Mammary epithelial cell (primary cell): ENCODE measurements at regions of chr6 and their contacts with region 1.

Region 1: GRCh38 chr6:129292836-129293235 is 409.9 kb downstream of the LAMA2 start:
- DNase-seq: no peak
- H3K4me3 ChIP-seq: no peak overlapping the region
- H3K27ac ChIP-seq: no peak overlapping the region
- H3K4me1 ChIP-seq: no peaks in the 10 kb centered on the region
- H3K27me3 ChIP-seq: peaks cover 3% of the 10 kb centered on the region
- CTCF ChIP-seq: no peak

Region 2: DNA sequence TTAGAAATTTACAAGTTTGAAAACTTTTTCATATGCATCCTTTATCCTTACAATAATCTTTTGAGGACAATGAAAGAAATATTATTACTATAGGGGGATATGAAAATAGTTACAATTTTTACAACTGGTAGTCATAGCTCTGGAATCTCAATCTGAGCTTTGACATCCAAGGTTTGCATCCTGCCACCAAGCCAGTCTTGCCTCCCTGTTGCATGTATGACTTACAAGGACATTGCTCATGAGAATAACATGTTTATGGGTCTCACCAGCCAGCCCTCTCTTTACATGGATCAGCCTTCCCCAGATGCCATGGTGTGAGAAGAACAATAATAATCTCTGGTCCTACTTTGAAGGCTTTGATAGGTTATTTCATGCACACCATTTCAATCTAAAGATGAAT is 1459.5 kb before region 1 on chr6:
- CTCF ChIA-PET with region 1: interaction called, 10 read pairs
- dilution Hi-C with region 1: no loop called
- in situ Hi-C with region 1: no loop called
- intact Hi-C with region 1: no loop called
- DNase-seq: no peak
- H3K4me3 ChIP-seq: no peak overlapping the region
- H3K27ac ChIP-seq: no peak overlapping the region
- H3K4me1 ChIP-seq: no peaks in the 10 kb centered on the region
- H3K27me3 ChIP-seq: peaks cover 3% of the 10 kb centered on the region
- CTCF ChIP-seq: no peak

Region 3: GRCh38 chr6:129251669-129252376 is 41.0 kb before region 1 on chr6:
- CTCF ChIA-PET with region 1: no interaction called
- dilution Hi-C with region 1: no loop called
- in situ Hi-C with region 1: no loop called
- intact Hi-C with region 1: no loop called
- DNase-seq: peak; percentile 58
- H3K4me3 ChIP-seq: no peak overlapping the region
- H3K27ac ChIP-seq: no peak overlapping the region
- H3K4me1 ChIP-seq: no peaks in the 10 kb centered on the region
- H3K27me3 ChIP-seq: peaks cover 4% of the 10 kb centered on the region
- CTCF ChIP-seq: peak; percentile 83 to 85

Region 4: GRCh38 chr6:129340983-129341382 is 48.1 kb after region 1 on chr6:
- CTCF ChIA-PET with region 1: no interaction called
- dilution Hi-C with region 1: no loop called
- in situ Hi-C with region 1: no loop called
- intact Hi-C with region 1: no loop called
- DNase-seq: peak; percentile 58
- H3K4me3 ChIP-seq: no peak overlapping the region
- H3K27ac ChIP-seq: no peak overlapping the region
- H3K4me1 ChIP-seq: no peaks in the 10 kb centered on the region
- H3K27me3 ChIP-seq: peaks cover 1% of the 10 kb centered on the region
- CTCF ChIP-seq: no peak

Region 5: DNA sequence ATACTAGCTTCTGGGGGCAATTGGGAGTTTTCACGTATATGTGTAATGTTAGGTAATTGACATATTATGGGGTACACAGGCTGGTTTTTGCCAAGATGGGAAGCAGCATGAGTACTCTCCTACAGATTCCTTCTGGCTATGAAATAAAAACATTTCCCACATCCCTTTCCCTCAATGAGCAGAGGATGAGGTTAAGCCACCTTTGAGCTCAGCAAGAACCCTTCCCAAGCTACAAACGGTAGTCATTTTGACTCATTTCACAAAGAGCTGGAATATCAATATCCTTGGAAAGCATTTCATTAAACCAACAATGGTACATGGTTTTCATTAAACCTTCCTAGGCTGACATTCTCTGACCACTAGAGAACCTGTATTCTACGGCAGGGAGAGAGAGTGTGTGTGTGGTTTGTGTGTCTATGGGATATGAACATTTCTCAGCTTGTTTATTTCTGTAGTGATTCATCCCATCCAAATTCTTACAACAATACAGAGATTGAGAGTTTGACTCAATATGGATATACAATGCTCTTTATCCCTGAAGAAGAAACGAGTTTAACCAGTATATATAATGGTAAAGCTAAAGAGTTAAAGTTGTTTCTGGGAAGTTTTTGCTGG is 297.7 kb after region 1 on chr6:
- CTCF ChIA-PET with region 1: no interaction called
- dilution Hi-C with region 1: no loop called
- in situ Hi-C with region 1: no loop called
- intact Hi-C with region 1: no loop called
- DNase-seq: peak; percentile 90
- H3K4me3 ChIP-seq: no peak overlapping the region
- H3K27ac ChIP-seq: peak overlapping the region; percentile 49
- H3K4me1 ChIP-seq: peaks cover 34% of the 10 kb centered on the region
- H3K27me3 ChIP-seq: no peaks in the 10 kb centered on the region
- CTCF ChIP-seq: no peak